ENCODE measurements at regions of chr7 and their contacts with region 1.

Region 1: DNA sequence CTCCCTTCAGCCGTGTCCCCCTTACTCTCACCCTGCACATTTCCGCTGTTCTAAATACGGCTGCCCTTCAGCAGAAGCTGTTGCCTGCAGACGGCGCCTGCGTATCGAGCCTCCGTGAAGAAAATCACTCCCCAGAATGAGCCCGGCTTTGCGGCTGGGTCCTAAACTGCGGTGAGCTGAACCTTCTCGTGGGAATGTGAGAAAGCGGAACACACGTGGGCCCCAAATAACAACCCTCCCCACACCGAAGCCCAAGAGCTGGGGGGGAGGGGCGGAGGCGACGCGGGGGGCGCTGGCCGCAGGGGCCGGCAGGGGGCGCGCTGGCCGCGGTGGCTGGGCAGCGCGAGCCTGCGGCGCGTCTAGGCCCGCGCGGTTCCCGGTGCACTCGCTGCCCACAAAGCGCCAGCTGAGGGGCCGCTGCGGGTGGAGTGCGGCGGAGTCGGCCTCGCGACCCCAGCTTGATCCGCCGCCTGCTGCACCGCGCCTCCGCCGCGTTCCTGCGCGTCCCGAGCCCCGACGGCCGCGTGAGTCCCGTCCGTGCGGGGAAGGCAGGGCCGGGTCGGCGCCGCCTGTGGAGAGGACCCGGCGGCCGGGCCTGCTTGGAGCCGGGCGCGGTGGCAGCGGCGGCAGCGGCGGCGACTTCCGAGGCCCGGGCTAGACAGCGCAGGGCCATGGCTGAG is at the start of gene ZNF398:
- DNase-seq: peak; percentile 77 to 91 (median 85)
- ATAC-seq: peak; percentile 92
- H3K4me3 ChIP-seq: peak within 1 kb of the TSS; percentile 98
- H3K4me3 Mint-ChIP-seq: peak within 1 kb of the TSS; percentile 88 to 98 (median 93)
- H3K27ac ChIP-seq: peak within 1 kb of the TSS; percentile 86
- H3K27ac Mint-ChIP-seq: peak within 1 kb of the TSS; percentile 90 to 98 (median 95)
- H3K4me1 ChIP-seq: peaks cover 8 to 23% of the 10 kb centered on the region in 2 donors
- H3K4me1 Mint-ChIP-seq: peaks cover 24 to 52% (median 42%) of the 10 kb centered on the region in 7 donors
- H3K27me3 ChIP-seq: no peaks in the 10 kb centered on the region
- H3K27me3 Mint-ChIP-seq: no peaks in the 10 kb centered on the region
- total RNA-seq, gene ZNF398: 14.6 to 27.9 (median 16.9) TPM

Region 2: DNA sequence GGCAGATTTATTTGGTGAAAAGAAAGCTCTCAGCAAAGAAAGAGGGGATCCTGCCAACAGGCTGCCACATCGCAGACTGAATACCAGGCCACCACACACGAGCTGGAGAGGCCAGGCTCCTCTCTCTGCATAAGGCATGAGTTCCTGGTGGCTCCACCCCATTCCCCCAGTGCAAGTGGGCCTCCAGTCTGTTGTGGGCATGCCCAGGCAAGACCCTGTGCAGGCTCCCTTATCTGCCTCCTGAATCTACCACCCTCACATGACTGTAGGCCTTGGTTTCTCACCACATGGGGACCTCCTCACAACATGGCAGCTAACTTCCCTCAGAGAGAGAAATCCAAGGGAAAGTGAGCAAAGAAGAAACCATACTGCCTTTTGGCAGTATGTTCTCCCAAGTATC is 475.2 kb before region 1 on chr7:
- CTCF ChIA-PET with region 1: no interaction called
- POLR2A ChIA-PET with region 1: no interaction called
- intact Hi-C with region 1: no loop called
- DNase-seq: no peak
- ATAC-seq: no peak
- H3K4me3 ChIP-seq: no peak overlapping the region
- H3K4me3 Mint-ChIP-seq: no peak overlapping the region
- H3K27ac ChIP-seq: no peak overlapping the region
- H3K27ac Mint-ChIP-seq: no peak overlapping the region
- H3K4me1 ChIP-seq: no peaks in the 10 kb centered on the region
- H3K4me1 Mint-ChIP-seq: peaks cover 0 to 12% (median 5%) of the 10 kb centered on the region in 7 donors
- H3K27me3 ChIP-seq: no peaks in the 10 kb centered on the region
- H3K27me3 Mint-ChIP-seq: peaks cover 4 to 6% (median 5%) of the 10 kb centered on the region in 5 donors

Region 3: GRCh38 chr7:148940702-148941597 is 206.3 kb before region 1 on chr7:
- CTCF ChIA-PET with region 1: no interaction called
- POLR2A ChIA-PET with region 1: no interaction called
- intact Hi-C with region 1: loop called in 1 of 2 experiments (anchors 1 kb)
- DNase-seq: peak; percentile 45 to 86 (median 76)
- ATAC-seq: peak; percentile 88
- H3K4me3 ChIP-seq: peak overlapping the region; percentile 95
- H3K4me3 Mint-ChIP-seq: peak overlapping the region; percentile 86 to 99 (median 96)
- H3K27ac ChIP-seq: peak overlapping the region; percentile 88
- H3K27ac Mint-ChIP-seq: peak overlapping the region; percentile 94 to 99 (median 98)
- H3K4me1 ChIP-seq: peaks cover 7 to 12% of the 10 kb centered on the region in 2 donors
- H3K4me1 Mint-ChIP-seq: peaks cover 8 to 25% (median 20%) of the 10 kb centered on the region in 7 donors
- H3K27me3 ChIP-seq: no peaks in the 10 kb centered on the region
- H3K27me3 Mint-ChIP-seq: no peaks in the 10 kb centered on the region

Region 4: DNA sequence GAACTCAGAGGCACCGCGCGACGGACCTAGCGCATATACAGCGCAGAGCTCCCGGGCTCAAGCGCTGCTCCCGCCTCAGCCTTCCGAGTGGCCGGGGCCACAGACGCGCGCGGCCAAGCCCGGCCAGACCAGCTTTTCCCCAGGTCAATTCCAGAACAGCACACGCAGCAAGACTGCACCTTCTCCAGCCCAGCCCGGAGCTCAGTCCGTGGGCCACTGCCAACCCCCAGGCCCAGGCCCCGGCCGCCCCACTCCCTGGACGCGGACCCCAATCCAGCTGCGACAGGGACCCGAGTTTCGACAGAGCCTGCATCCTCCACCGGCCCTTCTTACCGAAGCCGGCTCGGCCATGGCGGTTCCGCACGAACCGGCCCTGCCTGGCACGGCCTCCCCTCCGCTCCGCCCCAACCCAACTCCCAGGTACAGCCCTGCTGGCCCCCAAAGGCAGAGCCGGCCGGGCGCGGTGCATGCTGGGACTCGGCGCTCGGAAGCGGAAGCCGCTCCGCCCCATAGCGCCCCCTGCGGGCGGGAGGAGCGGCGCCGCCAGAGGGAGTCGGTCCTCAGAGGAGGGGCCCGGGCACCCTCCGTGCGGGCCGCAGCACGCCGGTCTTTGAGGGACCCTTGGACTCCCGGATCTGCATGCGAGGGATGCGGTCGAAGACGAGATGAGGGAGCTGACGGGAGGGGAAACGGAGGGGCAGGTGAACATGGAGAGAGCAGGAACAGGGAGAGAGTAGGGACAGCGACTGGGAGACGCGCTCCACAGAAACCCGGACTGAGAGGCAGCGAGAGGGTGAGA is 21.1 kb before region 1 on chr7 and contains the start of gene ZNF425:
- CTCF ChIA-PET with region 1: interaction called, 7 read pairs
- POLR2A ChIA-PET with region 1: interaction called, 65 read pairs
- intact Hi-C with region 1: loop called (anchors 1 kb)
- DNase-seq: peak; percentile 87 to 98 (median 92)
- ATAC-seq: peak; percentile 98
- H3K4me3 ChIP-seq: peak within 1 kb of the TSS; percentile 99
- H3K4me3 Mint-ChIP-seq: peak within 1 kb of the TSS; percentile 91 to 100 (median 100)
- H3K27ac ChIP-seq: peak within 1 kb of the TSS; percentile 91
- H3K27ac Mint-ChIP-seq: peak within 1 kb of the TSS; percentile 90 to 100 (median 98)
- H3K4me1 ChIP-seq: no peaks in the 10 kb centered on the region
- H3K4me1 Mint-ChIP-seq: peaks cover 19 to 28% (median 22%) of the 10 kb centered on the region in 7 donors
- H3K27me3 ChIP-seq: no peaks in the 10 kb centered on the region
- H3K27me3 Mint-ChIP-seq: no peaks in the 10 kb centered on the region
- total RNA-seq, gene ZNF425: 0.61 to 4.9 (median 1.0) TPM

Region 5: GRCh38 chr7:149239345-149240191 is 92.4 kb after region 1 on chr7 and contains the start of gene ZNF212:
- CTCF ChIA-PET with region 1: interaction called, 4 read pairs
- POLR2A ChIA-PET with region 1: no interaction called
- intact Hi-C with region 1: loop called (anchors 1 kb)
- DNase-seq: peak; percentile 75 to 89 (median 84)
- ATAC-seq: peak; percentile 100
- H3K4me3 ChIP-seq: peak within 1 kb of the TSS; percentile 90
- H3K4me3 Mint-ChIP-seq: peak within 1 kb of the TSS; percentile 85 to 95 (median 92)
- H3K27ac ChIP-seq: peak within 1 kb of the TSS; percentile 76
- H3K27ac Mint-ChIP-seq: peak within 1 kb of the TSS; percentile 71 to 89 (median 87)
- H3K4me1 ChIP-seq: peaks cover 14 to 16% of the 10 kb centered on the region in 2 donors
- H3K4me1 Mint-ChIP-seq: peaks cover 23 to 43% (median 33%) of the 10 kb centered on the region in 7 donors
- H3K27me3 ChIP-seq: no peaks in the 10 kb centered on the region
- H3K27me3 Mint-ChIP-seq: peaks cover 0 to 6% (median 0%) of the 10 kb centered on the region in 5 donors
- total RNA-seq, gene ZNF212: 10.4 to 20.6 (median 13.3) TPM

Region 6: GRCh38 chr7:149422129-149422913 is 275.1 kb after region 1 on chr7:
- CTCF ChIA-PET with region 1: interaction called, 3 read pairs
- POLR2A ChIA-PET with region 1: no interaction called
- intact Hi-C with region 1: loop called (anchors 1 to 5 kb)
- DNase-seq: peak; percentile 25 to 85 (median 75)
- ATAC-seq: peak; percentile 99
- H3K4me3 ChIP-seq: peak overlapping the region; percentile 75
- H3K4me3 Mint-ChIP-seq: peak overlapping the region; percentile 69 to 80 (median 76)
- H3K27ac ChIP-seq: peak overlapping the region; percentile 77
- H3K27ac Mint-ChIP-seq: peak overlapping the region in 8 of 9 donors; percentile 68 to 84 (median 81)
- H3K4me1 ChIP-seq: no peaks in the 10 kb centered on the region
- H3K4me1 Mint-ChIP-seq: peaks cover 0 to 17% (median 7%) of the 10 kb centered on the region in 7 donors
- H3K27me3 ChIP-seq: no peaks in the 10 kb centered on the region
- H3K27me3 Mint-ChIP-seq: peaks cover 0 to 14% (median 0%) of the 10 kb centered on the region in 5 donors

Measured in naive thymus-derived CD4-positive, alpha-beta T cell (primary cell).